Transverse colon (tissue), 4 donors: ENCODE measurements at regions of chr18 and their contacts with region 1.

Region 1: DNA sequence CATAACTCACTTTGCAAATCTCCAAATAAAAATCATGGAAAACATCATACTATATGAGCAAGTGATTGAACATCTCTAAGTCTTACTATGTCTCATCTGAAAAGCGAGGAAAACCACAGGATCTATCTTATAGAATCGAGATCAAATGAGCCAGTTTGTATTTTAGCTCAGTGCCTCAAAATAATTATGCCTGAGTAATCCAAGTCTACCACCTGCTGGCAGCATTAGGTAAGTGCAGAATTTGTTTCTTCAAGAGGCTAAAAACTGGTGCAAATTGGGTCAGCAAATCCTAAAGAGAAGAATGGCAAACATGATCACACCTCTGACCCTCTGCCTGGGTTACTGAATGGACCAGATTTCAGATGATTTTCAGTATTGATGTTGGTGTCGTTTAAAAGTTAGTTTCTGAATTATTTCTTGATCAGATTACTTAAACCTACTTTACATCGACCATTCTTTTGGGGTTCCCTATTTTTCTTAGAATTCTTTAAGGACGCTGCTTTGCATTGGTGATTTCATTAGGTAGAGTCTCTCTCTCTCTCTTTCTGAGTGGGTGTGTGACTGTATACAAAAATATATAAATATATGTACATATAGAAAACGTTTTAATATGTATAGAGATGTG is 12.7 kb upstream of the FHOD3 start:
- DNase-seq: peak; percentile 37
- H3K4me3 ChIP-seq: no peak overlapping the region
- H3K27ac ChIP-seq: no peak overlapping the region
- H3K4me1 ChIP-seq: no peaks in the 10 kb centered on the region
- H3K27me3 ChIP-seq: peaks cover 17% of the 10 kb centered on the region
- CTCF ChIP-seq: peak; percentile 85 to 92 (median 89)
- EP300 ChIP-seq: no peak
- POLR2A ChIP-seq: no peak

Region 2: GRCh38 chr18:35386600-35387351 is 898.0 kb before region 1 on chr18:
- in situ Hi-C with region 1: no loop called
- intact Hi-C with region 1: loop called (anchors 10 kb)
- DNase-seq: peak; percentile 68
- H3K4me3 ChIP-seq: no peak overlapping the region
- H3K27ac ChIP-seq: no peak overlapping the region
- H3K4me1 ChIP-seq: no peaks in the 10 kb centered on the region
- H3K27me3 ChIP-seq: no peaks in the 10 kb centered on the region
- CTCF ChIP-seq: peak; percentile 74 to 92 (median 86)
- EP300 ChIP-seq: no peak
- POLR2A ChIP-seq: no peak

Region 3: GRCh38 chr18:35756506-35757117 is 528.2 kb before region 1 on chr18:
- in situ Hi-C with region 1: loop called in 1 of 4 experiments (anchors 10 kb)
- intact Hi-C with region 1: no loop called
- DNase-seq: peak; percentile 35
- H3K4me3 ChIP-seq: no peak overlapping the region
- H3K27ac ChIP-seq: no peak overlapping the region
- H3K4me1 ChIP-seq: no peaks in the 10 kb centered on the region
- H3K27me3 ChIP-seq: peaks cover 15% of the 10 kb centered on the region
- CTCF ChIP-seq: peak; percentile 73 to 82 (median 76)
- EP300 ChIP-seq: no peak
- POLR2A ChIP-seq: no peak

Region 4: DNA sequence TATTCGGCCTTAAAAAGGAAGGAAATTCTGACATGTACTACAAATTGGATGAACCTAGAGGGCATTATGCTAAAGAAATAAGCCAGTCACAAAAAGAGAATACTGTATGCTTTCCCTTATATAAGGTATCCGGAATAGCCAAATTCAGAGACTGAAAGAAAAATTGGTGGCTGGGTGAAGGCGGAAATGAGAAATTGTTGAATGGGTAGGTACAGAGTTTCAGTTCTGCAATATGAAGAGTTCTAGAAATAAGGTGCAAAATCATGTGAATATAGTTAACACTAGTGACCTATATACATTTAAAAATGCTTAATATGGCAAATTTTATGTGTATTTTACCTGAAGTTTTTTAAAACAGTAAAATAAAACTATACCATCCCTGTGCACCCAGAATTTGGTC is 269.2 kb before region 1 on chr18:
- in situ Hi-C with region 1: loop called in 3 of 4 experiments (anchors 5 to 25 kb)
- intact Hi-C with region 1: loop called (anchors 5 kb)
- DNase-seq: no peak
- H3K4me3 ChIP-seq: no peak overlapping the region
- H3K27ac ChIP-seq: no peak overlapping the region
- H3K4me1 ChIP-seq: no peaks in the 10 kb centered on the region
- H3K27me3 ChIP-seq: no peaks in the 10 kb centered on the region
- CTCF ChIP-seq: no peak
- EP300 ChIP-seq: no peak
- POLR2A ChIP-seq: no peak

Region 5: GRCh38 chr18:36031407-36031806 is 253.4 kb before region 1 on chr18:
- in situ Hi-C with region 1: loop called in 1 of 4 experiments (anchors 5 kb)
- intact Hi-C with region 1: no loop called
- DNase-seq: no peak
- H3K4me3 ChIP-seq: no peak overlapping the region
- H3K27ac ChIP-seq: no peak overlapping the region
- H3K4me1 ChIP-seq: peaks cover 0 to 4% (median 0%) of the 10 kb centered on the region in 4 donors
- H3K27me3 ChIP-seq: no peaks in the 10 kb centered on the region
- CTCF ChIP-seq: no peak
- EP300 ChIP-seq: no peak
- POLR2A ChIP-seq: no peak

Region 6: DNA sequence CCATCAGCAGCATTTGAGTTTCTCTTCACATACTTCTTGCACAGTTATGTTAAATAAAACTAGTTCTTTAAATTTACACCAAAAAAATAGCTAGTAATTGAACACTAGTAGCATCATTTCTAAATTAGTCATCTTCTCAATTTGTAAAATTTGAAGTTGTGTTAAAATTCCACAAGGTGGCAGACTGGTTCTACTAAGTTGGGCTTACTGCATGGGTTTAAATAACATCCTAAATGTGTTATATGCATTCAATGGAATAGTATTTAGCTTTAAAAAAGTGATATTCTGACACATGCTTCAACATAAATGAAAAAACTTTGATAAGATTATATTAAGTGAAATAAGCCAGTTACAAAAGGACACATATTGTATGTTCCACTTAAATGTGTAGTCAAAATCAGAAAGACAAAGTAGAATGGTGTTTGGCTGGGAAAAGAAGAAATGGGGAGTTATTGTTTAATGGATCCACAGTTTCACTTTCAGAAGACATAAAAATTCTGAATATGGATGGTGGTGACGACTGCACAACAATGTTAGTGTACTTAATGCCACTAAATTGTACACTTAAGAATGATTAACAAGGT is 188.8 kb before region 1 on chr18:
- in situ Hi-C with region 1: loop called (anchors 5 to 10 kb)
- intact Hi-C with region 1: loop called (anchors 5 kb)
- DNase-seq: no peak
- H3K4me3 ChIP-seq: no peak overlapping the region
- H3K27ac ChIP-seq: no peak overlapping the region
- H3K4me1 ChIP-seq: no peaks in the 10 kb centered on the region
- H3K27me3 ChIP-seq: no peaks in the 10 kb centered on the region
- CTCF ChIP-seq: peak; percentile 47 to 67 (median 59)
- EP300 ChIP-seq: no peak
- POLR2A ChIP-seq: no peak